ENCODE measurements at regions of chr1 and their contacts with region 1.

Region 1: GRCh38 chr1:198357937-198358336 is 182.5 kb downstream of the ATP6V1G3 start:
- DNase-seq: no peak

Region 2: DNA sequence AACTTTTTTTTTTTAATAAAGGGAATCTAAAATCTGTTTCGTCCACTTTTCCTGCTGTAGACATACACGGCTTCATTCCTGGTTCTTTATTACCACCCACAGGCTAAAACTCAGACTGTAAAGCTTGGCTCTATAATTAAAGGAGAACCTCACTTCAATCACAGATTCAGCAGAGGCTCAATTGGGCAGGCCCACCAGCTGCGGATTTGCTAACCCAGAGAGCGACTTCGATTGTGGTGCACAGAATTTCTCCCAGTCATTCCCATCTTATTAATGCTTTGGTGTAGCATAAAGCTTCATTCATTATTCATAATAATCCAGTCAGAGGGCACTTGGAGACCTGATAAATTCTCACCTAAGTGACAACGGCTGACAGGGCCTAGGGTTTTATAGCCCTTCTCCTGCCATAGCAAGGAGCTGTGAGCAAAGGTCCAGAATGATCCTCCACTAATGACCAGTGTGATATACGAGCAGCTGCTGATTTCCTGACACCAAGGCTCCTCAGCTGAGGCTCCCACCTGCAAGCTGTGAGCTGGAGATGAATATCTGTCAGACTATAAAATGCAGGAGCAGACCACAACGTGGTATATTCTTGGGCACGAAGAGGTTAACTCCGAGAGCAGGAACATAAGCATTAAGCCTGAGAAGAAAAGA is 33.6 kb after region 1 on chr1:
- CTCF ChIA-PET with region 1: interaction called, 15 read pairs
- POLR2A ChIA-PET with region 1: no interaction called
- DNase-seq: no peak

Region 3: GRCh38 chr1:198408716-198409115 is 50.8 kb after region 1 on chr1:
- CTCF ChIA-PET with region 1: no interaction called
- POLR2A ChIA-PET with region 1: no interaction called
- DNase-seq: no peak

Region 4: DNA sequence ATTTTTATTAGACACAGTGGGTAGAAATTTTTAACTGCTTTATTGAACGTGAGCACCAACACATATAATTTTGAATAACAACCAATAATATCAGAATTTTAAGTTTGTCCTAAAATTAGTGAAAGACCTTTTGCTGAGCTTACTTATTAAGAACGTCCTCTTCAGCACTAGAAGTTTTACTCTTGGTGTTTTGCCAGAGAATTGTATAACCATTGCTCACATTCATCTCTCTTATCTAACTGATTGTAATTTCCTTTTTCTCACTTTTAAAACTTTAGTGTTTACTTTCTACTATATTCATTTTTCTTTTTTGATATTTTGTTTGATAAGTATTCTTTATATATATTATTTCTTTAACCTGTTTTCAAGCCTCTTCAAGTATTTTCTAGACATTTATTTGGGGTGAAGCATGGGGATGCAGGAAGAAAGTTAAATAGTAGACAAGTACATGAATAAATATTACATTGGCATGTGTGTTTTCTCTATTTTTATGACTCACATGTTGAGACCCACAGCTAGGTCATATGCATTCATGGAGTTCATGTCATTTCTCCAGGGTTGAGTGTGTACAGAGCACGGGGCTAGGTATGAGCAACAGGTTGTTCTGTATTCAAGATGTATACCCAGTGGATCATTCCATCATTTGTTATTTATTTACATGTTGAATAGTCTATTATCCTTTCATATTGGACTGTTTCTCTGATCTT is 91.9 kb after region 1 on chr1:
- CTCF ChIA-PET with region 1: no interaction called
- POLR2A ChIA-PET with region 1: no interaction called
- DNase-seq: no peak

Measured in HEK293T (cell line).